CD4-positive, alpha-beta memory T cell (primary cell): ENCODE measurements at regions of chr9 and their contacts with region 1.

Region 1: DNA sequence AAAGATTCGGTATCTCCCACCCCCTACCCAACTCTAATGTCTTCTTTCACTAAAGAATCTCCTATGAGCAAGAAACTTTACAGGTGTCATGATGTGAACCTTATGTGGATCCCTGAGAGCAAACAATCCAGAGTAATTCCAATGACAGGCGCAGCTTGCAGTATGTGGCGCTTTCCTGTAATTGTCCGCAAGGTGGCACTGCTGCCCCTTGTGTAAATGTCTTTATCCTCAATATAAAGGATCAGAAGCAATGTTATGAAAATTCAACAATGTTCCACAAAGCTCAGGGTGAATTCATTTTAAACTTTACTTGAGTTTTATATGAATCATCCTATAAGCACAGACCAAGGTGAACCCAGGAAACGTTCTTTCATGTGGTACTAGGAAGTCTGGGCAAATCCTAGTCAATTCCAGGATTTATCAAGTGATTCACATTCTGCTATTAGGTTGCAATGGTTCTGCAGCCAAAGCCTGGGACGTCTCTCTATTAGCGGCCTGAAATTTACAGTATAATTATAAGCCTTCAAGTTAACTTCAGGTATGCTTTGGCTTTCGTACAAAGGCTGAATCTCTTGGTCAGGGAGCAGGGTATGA is 113.7 kb downstream of the TRPM6 start:
- DNase-seq: peak; percentile 61 to 66 (median 61)
- H3K4me3 ChIP-seq: no peak overlapping the region
- H3K4me3 Mint-ChIP-seq: no peak overlapping the region
- H3K27ac ChIP-seq: no peak overlapping the region
- H3K27ac Mint-ChIP-seq: no peak overlapping the region
- H3K4me1 ChIP-seq: no peaks in the 10 kb centered on the region
- H3K4me1 Mint-ChIP-seq: peaks cover 0 to 3% (median 2%) of the 10 kb centered on the region in 4 donors
- H3K27me3 ChIP-seq: no peaks in the 10 kb centered on the region
- H3K27me3 Mint-ChIP-seq: peaks cover 14 to 19% of the 10 kb centered on the region in 2 donors

Region 2: GRCh38 chr9:74952281-74953151 is 178.5 kb after region 1 on chr9 and contains the start of gene C9orf40:
- CTCF ChIA-PET with region 1: interaction called, 9 read pairs
- POLR2A ChIA-PET with region 1: interaction called, 3 read pairs
- intact Hi-C with region 1: loop called (anchors 5 kb)
- DNase-seq: peak; percentile 88 to 90 (median 89)
- H3K4me3 ChIP-seq: peak within 1 kb of the TSS; percentile 66 to 96
- H3K4me3 Mint-ChIP-seq: peak within 1 kb of the TSS; percentile 96 to 100 (median 98)
- H3K27ac ChIP-seq: peak within 1 kb of the TSS; percentile 82
- H3K27ac Mint-ChIP-seq: peak within 1 kb of the TSS; percentile 93 to 98 (median 97)
- H3K4me1 ChIP-seq: peaks cover 23% of the 10 kb centered on the region
- H3K4me1 Mint-ChIP-seq: peaks cover 9 to 31% (median 23%) of the 10 kb centered on the region in 4 donors
- H3K27me3 ChIP-seq: no peaks in the 10 kb centered on the region
- H3K27me3 Mint-ChIP-seq: no peaks in the 10 kb centered on the region
- total RNA-seq, gene C9orf40: 7.1 to 7.4 TPM

Region 3: GRCh38 chr9:75027187-75028107 is 253.5 kb after region 1 on chr9:
- CTCF ChIA-PET with region 1: interaction called, 10 read pairs
- POLR2A ChIA-PET with region 1: interaction called, 4 read pairs
- intact Hi-C with region 1: no loop called
- DNase-seq: peak in 4 of 5 donors; percentile 17 to 63 (median 41)
- H3K4me3 ChIP-seq: peak overlapping the region; percentile 72 to 74
- H3K4me3 Mint-ChIP-seq: peak overlapping the region; percentile 94 to 98 (median 96)
- H3K27ac ChIP-seq: peak overlapping the region; percentile 77
- H3K27ac Mint-ChIP-seq: peak overlapping the region; percentile 89 to 99 (median 96)
- H3K4me1 ChIP-seq: peaks cover 48% of the 10 kb centered on the region
- H3K4me1 Mint-ChIP-seq: peaks cover 33 to 54% (median 43%) of the 10 kb centered on the region in 4 donors
- H3K27me3 ChIP-seq: no peaks in the 10 kb centered on the region
- H3K27me3 Mint-ChIP-seq: peaks cover 0 to 2% of the 10 kb centered on the region in 2 donors

Region 4: DNA sequence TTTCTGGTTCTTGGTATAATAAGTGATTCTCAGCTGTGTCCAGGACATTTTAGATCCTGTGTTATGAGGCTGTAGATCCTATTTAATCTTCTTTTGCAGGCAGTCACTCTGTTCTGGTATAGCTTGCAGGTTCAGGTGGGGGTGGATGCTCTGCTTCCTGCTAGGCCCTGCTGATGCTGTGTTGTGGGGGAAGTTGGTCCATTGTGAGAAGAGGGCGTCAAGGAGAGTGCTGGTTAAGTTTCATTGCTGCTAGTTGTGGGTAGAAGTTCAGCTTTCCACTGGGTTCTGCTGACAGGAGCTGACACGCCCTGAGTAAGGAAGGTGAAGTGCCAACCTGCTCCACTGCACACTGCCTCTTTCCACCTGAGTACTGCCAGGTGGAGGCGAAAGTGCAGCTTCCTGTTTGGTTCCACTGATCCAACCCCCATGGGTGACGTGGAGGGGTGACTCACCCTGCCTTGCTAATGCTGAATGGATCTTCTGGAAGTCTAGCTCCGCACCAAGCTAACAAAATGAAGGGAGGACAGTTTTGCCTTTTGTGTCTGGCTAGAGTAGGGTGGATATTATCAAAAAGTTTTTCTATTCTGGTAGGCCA is 297.6 kb after region 1 on chr9:
- CTCF ChIA-PET with region 1: interaction called, 58 read pairs
- POLR2A ChIA-PET with region 1: interaction called, 3 read pairs
- intact Hi-C with region 1: no loop called
- DNase-seq: peak; percentile 35 to 88 (median 42)
- H3K4me3 ChIP-seq: no peak overlapping the region
- H3K4me3 Mint-ChIP-seq: peak overlapping the region in 1 of 8 donors; percentile 23
- H3K27ac ChIP-seq: no peak overlapping the region
- H3K27ac Mint-ChIP-seq: peak overlapping the region; percentile 29 to 87 (median 57)
- H3K4me1 ChIP-seq: peaks cover 13% of the 10 kb centered on the region
- H3K4me1 Mint-ChIP-seq: peaks cover 12 to 30% (median 15%) of the 10 kb centered on the region in 4 donors
- H3K27me3 ChIP-seq: no peaks in the 10 kb centered on the region
- H3K27me3 Mint-ChIP-seq: no peaks in the 10 kb centered on the region